ENCODE measurements at regions of chr1 and their contacts with region 1.

Region 1: GRCh38 chr1:67214420-67215174 is 48.3 kb downstream of the IL23R start:
- DNase-seq: peak; percentile 75
- H3K4me3 Mint-ChIP-seq: no peak overlapping the region
- H3K27ac Mint-ChIP-seq: peak overlapping the region; percentile 55
- H3K4me1 Mint-ChIP-seq: peaks cover 38% of the 10 kb centered on the region
- H3K27me3 Mint-ChIP-seq: no peaks in the 10 kb centered on the region

Region 2: GRCh38 chr1:66996018-66996682 is 218.4 kb before region 1 on chr1:
- CTCF ChIA-PET with region 1: interaction called, 22 read pairs
- POLR2A ChIA-PET with region 1: no interaction called
- DNase-seq: peak; percentile 80
- H3K4me3 Mint-ChIP-seq: no peak overlapping the region
- H3K27ac Mint-ChIP-seq: no peak overlapping the region
- H3K4me1 Mint-ChIP-seq: peaks cover 18% of the 10 kb centered on the region
- H3K27me3 Mint-ChIP-seq: no peaks in the 10 kb centered on the region

Region 3: DNA sequence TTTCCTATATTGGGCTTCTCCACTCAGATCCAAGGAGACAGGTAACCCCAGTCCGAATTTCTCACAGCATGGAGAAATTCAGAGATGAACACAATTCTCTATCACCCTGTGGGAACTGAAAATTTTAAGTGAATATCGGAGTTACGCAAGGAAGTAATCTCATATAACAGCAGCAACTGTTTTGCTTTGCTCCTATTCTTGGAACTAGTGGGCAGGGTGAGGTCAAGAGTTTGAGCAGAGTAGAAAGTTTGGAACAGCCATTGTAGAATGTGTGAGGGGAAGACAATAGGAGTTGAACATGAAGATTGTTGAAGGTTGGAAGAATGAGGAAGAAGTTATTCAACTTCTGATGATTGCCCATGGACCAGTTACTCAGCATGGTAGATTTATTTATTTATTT is 136.3 kb before region 1 on chr1:
- CTCF ChIA-PET with region 1: no interaction called
- POLR2A ChIA-PET with region 1: no interaction called
- DNase-seq: no peak
- H3K4me3 Mint-ChIP-seq: no peak overlapping the region
- H3K27ac Mint-ChIP-seq: no peak overlapping the region
- H3K4me1 Mint-ChIP-seq: no peaks in the 10 kb centered on the region
- H3K27me3 Mint-ChIP-seq: no peaks in the 10 kb centered on the region

Region 4: DNA sequence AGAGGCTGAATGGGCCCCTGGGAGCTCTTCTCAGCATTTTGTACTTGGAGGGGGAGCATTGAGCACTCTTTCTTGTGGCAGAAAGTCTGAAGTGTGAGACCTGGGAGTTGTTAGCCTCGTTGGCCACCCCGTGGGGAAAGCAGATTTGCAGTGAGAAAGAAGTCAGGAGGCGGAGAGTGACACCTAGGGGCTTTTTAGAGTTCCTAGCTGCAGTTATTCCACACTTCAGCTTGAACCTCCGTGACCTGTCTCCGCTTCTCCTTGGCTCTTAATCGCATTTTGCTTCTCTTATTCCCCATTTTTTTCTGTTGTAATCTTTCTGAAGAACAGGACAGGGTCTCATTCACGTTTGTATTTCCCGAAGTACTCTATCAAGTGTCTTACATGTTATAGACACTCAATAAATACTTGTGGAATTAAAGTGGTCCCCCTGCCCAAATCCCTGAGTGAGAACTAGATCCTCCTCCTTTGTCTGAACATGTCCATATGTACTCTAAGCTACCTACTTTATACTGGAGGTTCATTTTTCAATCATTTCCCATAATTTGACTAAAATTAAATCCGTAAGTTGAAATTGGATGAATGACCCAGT is 65.3 kb before region 1 on chr1:
- CTCF ChIA-PET with region 1: interaction called, 35 read pairs
- POLR2A ChIA-PET with region 1: interaction called, 17 read pairs
- DNase-seq: peak; percentile 70
- H3K4me3 Mint-ChIP-seq: no peak overlapping the region
- H3K27ac Mint-ChIP-seq: no peak overlapping the region
- H3K4me1 Mint-ChIP-seq: peaks cover 29% of the 10 kb centered on the region
- H3K27me3 Mint-ChIP-seq: peaks cover 24% of the 10 kb centered on the region

Region 5: DNA sequence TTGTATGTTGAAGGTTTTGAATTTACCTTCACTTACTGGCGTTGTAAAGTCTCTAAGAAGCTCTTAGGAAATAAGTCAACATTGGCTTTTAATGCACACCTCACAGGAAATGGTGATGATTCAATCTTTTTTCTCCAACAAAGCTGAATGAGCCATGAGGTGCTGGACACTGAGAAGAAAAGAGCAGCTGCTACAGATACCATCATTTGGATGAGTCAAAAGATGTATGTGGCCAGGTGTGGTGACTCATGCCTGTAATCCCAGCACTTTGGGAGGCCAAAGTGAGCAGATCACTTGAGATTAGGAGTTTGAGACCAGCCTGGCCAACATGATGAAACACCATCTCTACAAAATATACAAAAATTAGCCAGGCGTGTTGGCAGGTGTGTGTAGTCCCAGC is 51.6 kb before region 1 on chr1:
- CTCF ChIA-PET with region 1: interaction called, 17 read pairs
- POLR2A ChIA-PET with region 1: no interaction called
- DNase-seq: peak; percentile 28
- H3K4me3 Mint-ChIP-seq: no peak overlapping the region
- H3K27ac Mint-ChIP-seq: peak overlapping the region; percentile 68
- H3K4me1 Mint-ChIP-seq: peaks cover 30% of the 10 kb centered on the region
- H3K27me3 Mint-ChIP-seq: peaks cover 4% of the 10 kb centered on the region

Region 6: DNA sequence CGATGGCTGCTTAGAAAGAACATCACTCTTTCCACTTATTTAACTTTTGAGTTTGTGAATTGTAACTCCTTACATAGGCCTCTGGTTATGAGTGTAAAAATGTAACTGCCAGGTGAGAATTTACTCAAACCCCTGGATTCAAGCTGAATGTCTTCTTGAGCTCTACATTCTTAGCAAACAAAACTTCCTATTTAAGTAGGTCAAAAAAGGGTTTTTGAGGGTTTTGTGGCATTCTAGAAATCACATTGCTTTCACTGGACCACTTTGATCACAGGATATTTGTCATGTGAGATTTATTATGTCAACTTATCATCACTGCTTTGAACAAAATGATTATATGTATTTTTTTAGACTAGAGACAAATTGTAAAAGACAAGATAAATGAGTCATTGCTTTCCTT is 42.6 kb before region 1 on chr1:
- CTCF ChIA-PET with region 1: interaction called, 17 read pairs
- POLR2A ChIA-PET with region 1: interaction called, 3 read pairs
- DNase-seq: no peak
- H3K4me3 Mint-ChIP-seq: peak overlapping the region; percentile 20
- H3K27ac Mint-ChIP-seq: peak overlapping the region; percentile 80
- H3K4me1 Mint-ChIP-seq: peaks cover 55% of the 10 kb centered on the region
- H3K27me3 Mint-ChIP-seq: peaks cover 4% of the 10 kb centered on the region

Region 7: DNA sequence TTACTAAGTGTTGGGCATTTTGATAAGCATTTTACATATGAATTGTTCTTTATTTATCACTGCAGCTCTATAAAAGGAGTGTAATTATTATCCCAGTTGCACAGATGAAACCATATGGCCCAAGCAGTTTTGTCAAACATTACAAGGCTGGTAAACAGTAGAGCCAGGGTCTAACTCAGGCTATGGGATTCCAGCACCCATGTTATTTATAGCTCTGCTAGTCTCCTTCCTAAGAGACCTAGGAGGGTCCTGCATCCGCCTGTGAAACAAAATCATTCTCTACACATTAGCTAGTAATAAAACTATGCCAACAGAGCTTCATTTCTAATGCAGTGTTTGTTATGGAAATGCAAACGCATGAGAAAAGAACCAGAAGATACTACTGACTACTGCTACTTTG is 10.3 kb after region 1 on chr1:
- CTCF ChIA-PET with region 1: interaction called, 16 read pairs
- POLR2A ChIA-PET with region 1: no interaction called
- DNase-seq: no peak
- H3K4me3 Mint-ChIP-seq: no peak overlapping the region
- H3K27ac Mint-ChIP-seq: no peak overlapping the region
- H3K4me1 Mint-ChIP-seq: peaks cover 7% of the 10 kb centered on the region
- H3K27me3 Mint-ChIP-seq: no peaks in the 10 kb centered on the region

Region 8: DNA sequence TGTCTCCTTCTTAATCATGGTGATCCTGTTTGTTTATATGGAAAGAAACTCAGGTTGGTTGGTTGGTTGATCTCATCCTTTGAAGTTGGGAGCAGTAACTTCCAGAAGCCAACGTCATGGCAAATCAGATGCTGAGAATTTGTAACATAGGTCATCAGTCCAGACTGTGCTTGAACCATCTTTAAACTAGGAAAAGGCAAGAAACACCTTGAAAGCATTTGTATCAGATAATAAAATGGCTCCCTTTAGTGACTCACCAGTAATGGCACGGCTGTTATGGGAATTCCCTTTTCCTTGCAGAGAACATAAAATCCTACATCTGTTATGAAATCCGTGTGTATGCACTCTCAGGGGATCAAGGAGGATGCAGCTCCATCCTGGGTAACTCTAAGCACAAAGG is 157.5 kb after region 1 on chr1:
- CTCF ChIA-PET with region 1: no interaction called
- POLR2A ChIA-PET with region 1: no interaction called
- DNase-seq: no peak
- H3K4me3 Mint-ChIP-seq: no peak overlapping the region
- H3K27ac Mint-ChIP-seq: no peak overlapping the region
- H3K4me1 Mint-ChIP-seq: no peaks in the 10 kb centered on the region
- H3K27me3 Mint-ChIP-seq: no peaks in the 10 kb centered on the region

Region 9: DNA sequence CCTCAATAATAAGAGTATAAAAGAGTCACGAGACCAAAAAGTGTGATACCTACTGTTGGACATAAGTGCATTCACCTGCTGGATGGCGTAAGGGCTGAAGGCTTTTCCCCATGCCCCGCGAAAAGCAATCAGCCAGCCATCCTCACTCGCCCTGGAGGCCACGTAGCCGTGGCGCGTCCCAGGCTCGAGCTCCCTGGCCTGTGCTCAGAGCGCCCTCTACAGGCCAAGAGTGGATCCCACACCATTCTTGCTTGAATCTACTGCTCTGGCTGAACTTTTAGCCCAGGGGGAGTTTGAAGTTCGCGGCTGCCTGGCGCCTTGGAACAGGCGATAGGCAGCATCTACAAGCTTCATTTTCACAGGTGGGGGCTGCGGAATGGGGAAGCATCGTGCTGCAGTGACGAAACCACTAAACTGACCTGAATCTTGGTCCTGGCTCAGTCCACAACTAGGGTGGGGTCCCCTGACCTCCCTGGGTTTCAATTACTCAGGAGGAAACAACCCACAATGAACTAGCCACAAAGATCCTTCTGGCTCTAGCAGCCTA is 285.9 kb after region 1 on chr1:
- CTCF ChIA-PET with region 1: interaction called, 74 read pairs
- POLR2A ChIA-PET with region 1: no interaction called
- DNase-seq: peak; percentile 90
- H3K4me3 Mint-ChIP-seq: no peak overlapping the region
- H3K27ac Mint-ChIP-seq: no peak overlapping the region
- H3K4me1 Mint-ChIP-seq: peaks cover 4% of the 10 kb centered on the region
- H3K27me3 Mint-ChIP-seq: peaks cover 7% of the 10 kb centered on the region

Measured in activated CD4-positive, alpha-beta T cell treated with anti-CD3 and anti-CD28 coated beads, Interleukin-2, amount 10 ng/mL, durations not matched to agents 7 days and 5 days (primary cell).